AG04449 (cell line): ENCODE measurements at regions of chr10 and their contacts with region 1.

Region 1: GRCh38 chr10:112307358-112308124 is 24.3 kb downstream of the TECTB start:
- DNase-seq: peak; percentile 9
- H3K4me3 ChIP-seq: no peak overlapping the region
- CTCF ChIP-seq: peak; percentile 86

Region 2: GRCh38 chr10:111852801-111853200 is 454.7 kb before region 1 on chr10:
- CTCF ChIA-PET with region 1: no interaction called
- POLR2A ChIA-PET with region 1: no interaction called
- DNase-seq: no peak
- H3K4me3 ChIP-seq: no peak overlapping the region
- CTCF ChIP-seq: no peak

Region 3: GRCh38 chr10:112122827-112123226 is 184.7 kb before region 1 on chr10:
- CTCF ChIA-PET with region 1: interaction called, 194 read pairs
- POLR2A ChIA-PET with region 1: no interaction called
- DNase-seq: no peak
- H3K4me3 ChIP-seq: no peak overlapping the region
- CTCF ChIP-seq: no peak

Region 4: GRCh38 chr10:112160834-112161233 is 146.7 kb before region 1 on chr10:
- CTCF ChIA-PET with region 1: interaction called, 15 read pairs
- POLR2A ChIA-PET with region 1: no interaction called
- DNase-seq: no peak
- H3K4me3 ChIP-seq: no peak overlapping the region
- CTCF ChIP-seq: no peak

Region 5: DNA sequence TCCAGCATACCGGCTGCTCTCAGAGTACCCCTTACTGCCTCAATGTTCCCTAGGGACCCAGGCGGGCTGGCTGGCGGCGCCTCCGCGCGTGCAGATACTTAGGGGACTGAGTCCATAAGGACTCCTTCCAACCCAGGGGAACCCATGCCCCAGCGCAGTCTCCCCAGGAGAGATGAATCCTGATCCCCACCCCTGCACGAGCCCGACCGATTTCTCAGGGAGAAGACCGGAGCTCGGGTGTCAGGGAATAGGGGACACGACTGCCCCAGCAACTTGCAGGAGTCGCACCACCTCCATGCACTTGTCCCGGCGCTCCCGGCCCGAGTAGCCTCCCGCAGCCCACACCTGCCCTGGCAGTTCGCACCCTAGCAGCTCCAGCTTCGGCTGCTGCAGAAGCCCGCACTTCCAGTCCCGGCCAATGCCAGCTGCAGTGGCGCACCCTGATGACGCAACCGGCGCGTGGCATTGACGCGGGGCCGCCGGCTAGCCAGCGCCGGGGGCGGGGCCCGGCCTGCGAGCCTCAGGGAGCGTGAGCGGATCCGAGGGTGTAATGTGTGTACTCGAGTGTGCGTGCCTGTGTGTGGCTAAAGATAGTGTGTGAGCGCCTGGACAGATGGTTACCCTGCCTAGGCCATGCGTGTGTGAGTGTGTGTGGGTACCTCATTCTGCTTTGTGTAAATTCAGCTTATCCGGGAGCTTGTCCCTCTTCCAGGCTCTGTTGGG is 124.1 kb before region 1 on chr10 and contains the start of gene GPAM:
- CTCF ChIA-PET with region 1: interaction called, 68 read pairs
- POLR2A ChIA-PET with region 1: interaction called, 5 read pairs
- DNase-seq: peak; percentile 41
- H3K4me3 ChIP-seq: peak within 1 kb of the TSS; percentile 96
- CTCF ChIP-seq: no peak

Region 6: GRCh38 chr10:112295853-112296830 is 11.4 kb before region 1 on chr10:
- CTCF ChIA-PET with region 1: interaction called, 15 read pairs
- POLR2A ChIA-PET with region 1: no interaction called
- DNase-seq: peak; percentile 42
- H3K4me3 ChIP-seq: no peak overlapping the region
- CTCF ChIP-seq: no peak